Heart left ventricle (tissue), 16 donors: ENCODE measurements at regions of chr2 and their contacts with region 1.

Region 1: DNA sequence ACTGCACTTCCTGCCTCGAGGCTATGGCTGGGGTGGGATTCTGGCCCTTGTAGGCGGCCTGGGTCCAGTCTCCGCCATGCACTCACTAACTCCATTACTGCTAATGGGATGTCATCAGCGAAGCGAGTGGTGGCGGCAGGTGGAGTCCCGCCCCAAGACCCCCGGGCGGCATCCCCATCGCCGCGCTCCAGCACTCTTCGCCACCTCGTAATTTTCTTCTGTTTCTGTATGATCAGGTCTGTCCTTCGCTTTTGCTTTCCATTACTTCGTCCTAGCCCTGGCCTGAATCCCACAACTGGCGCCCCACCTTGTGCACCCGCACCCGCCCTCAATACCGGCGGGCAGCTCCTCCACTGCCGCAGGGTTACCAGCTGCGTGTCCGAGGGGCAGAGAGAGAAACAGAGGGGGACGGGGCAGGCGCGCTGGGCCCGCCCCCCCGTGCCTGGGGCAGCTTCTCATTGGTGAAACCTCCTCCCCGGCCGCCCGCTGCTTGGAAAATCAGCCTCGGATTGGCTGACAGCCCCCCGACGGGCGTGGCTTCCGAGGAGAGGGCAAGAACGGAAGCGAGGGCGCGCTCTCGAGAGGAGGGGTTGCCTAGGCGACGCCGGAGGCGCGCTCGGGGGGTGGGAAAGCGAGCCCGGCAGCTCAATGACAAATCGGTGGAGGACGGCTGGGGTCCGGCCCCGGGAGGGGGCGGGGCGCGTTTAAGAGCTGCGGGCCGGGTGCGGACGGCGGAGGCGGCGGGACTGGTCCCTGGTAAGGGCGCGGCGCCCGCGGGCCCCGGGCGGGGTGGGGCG is at the start of gene RALB:
- DNase-seq: peak; percentile 100
- ATAC-seq: peak; percentile 96 to 97 (median 96)
- H3K4me3 ChIP-seq: peak within 1 kb of the TSS; percentile 57 to 97 (median 87)
- H3K27ac ChIP-seq: peak within 1 kb of the TSS; percentile 89 to 99 (median 94)
- H3K4me1 ChIP-seq: peaks cover 2 to 53% (median 43%) of the 10 kb centered on the region in 12 donors
- H3K27me3 ChIP-seq: no peaks in the 10 kb centered on the region
- CTCF ChIP-seq: no peak
- POLR2A ChIP-seq: peak in 1 of 2 donors; percentile 76
- total RNA-seq, gene RALB: 35.7 to 59.9 (median 45.1) TPM

Region 2: DNA sequence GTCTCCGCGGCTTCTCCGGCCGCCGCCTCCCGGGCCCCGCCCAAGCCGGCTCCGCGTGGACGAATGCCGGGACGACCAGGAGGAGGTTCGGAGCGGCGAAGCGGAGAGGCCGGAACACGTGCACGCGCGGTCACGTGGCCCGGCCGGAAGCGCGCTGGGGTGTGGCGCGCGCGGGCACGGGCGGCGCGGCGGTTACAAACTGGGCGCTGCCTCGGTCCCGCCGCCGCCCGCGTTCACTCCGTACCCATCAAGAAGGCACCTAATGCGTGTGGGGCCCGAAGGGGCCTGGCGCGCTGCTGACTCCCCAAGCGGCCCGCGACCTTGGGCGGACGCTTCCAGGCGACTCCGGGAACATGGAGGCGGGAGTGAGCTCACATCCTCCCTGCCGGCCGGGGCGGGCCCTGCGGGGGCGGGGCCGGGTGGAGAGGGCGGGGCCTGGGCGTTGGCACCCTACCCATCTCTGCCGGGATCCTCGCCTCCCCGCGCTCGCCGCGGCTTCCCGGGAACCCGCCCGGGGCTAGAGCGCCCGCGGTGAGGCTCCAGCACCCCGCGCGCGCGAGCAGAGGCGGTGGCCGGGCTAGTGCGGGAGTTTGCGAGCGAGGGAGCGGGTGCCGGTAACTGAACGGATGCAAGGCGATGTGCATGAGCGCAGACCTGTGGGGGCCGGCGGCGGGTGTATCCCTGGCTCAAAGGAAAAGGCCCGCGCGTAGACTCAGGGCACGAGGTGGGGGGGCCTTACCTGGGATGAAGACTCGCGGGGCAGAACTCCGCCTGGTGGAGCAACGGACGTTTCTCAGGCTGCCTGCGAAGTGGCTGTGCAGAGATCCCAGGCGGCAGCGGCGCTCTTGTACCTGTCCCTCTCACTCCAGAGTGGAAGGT is 29.1 kb before region 1 on chr2 and contains the start of gene TMEM185B:
- intact Hi-C with region 1: loop called in 4 of 10 experiments (anchors 1 to 5 kb)
- DNase-seq: peak; percentile 90 to 96 (median 92)
- ATAC-seq: peak; percentile 87 to 98 (median 97)
- H3K4me3 ChIP-seq: peak within 1 kb of the TSS; percentile 38 to 89 (median 70)
- H3K27ac ChIP-seq: peak within 1 kb of the TSS; percentile 83 to 98 (median 90)
- H3K4me1 ChIP-seq: peaks cover 0 to 41% (median 25%) of the 10 kb centered on the region in 12 donors
- H3K27me3 ChIP-seq: no peaks in the 10 kb centered on the region
- CTCF ChIP-seq: peak in 7 of 12 donors; percentile 4 to 44 (median 26)
- POLR2A ChIP-seq: peak in 1 of 2 donors; percentile 74
- total RNA-seq, gene TMEM185B: 16.1 to 29.8 (median 26.8) TPM

Region 3: DNA sequence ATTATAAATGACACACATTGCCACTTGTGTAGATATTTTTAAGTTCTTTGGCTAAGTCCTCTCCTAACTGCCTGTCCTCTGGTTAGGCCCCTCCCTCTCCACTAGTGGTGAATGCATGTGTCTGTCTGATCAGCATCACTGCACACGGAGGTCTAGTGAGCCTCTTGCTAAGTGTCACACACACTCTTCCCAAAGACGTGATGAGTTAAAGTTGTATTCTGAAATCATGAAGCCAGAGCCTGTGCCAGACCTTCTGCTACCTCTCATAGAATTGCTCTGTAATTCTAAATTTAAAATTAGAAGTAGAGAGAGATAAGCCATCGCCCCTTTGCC is 41.6 kb after region 1 on chr2:
- intact Hi-C with region 1: loop called in 2 of 10 experiments (anchors 2 to 5 kb)
- DNase-seq: peak in 2 of 5 donors; percentile 41 to 47
- ATAC-seq: peak in 3 of 4 donors; percentile 66 to 94 (median 72)
- H3K4me3 ChIP-seq: no peak overlapping the region
- H3K27ac ChIP-seq: peak overlapping the region in 2 of 12 donors; percentile 23 to 32
- H3K4me1 ChIP-seq: peaks cover 0 to 41% (median 28%) of the 10 kb centered on the region in 12 donors
- H3K27me3 ChIP-seq: no peaks in the 10 kb centered on the region
- CTCF ChIP-seq: no peak
- POLR2A ChIP-seq: no peak

Region 4: DNA sequence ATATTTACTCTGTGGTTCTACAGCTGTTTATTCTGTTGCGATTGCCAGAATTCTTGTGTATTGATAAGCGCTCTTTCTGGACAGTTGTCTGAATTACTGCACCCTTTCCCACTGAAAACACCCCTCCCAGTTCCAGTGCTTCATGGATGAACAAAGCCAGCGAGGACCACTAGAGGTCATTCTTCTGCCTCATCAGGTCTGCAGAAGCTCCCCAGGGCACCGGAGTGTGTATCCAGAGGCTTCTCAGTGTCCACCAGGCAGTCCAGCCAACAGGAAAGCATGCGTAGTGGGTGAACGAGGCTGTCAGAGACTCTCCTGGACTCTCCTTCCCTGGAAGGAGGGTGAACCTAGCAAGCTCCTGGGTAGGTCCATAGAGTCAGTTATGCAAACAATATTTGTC is 52.9 kb after region 1 on chr2:
- intact Hi-C with region 1: loop called in 8 of 10 experiments (anchors 5 to 10 kb)
- DNase-seq: no peak
- ATAC-seq: peak in 2 of 4 donors; percentile 36 to 37
- H3K4me3 ChIP-seq: no peak overlapping the region
- H3K27ac ChIP-seq: no peak overlapping the region
- H3K4me1 ChIP-seq: no peaks in the 10 kb centered on the region
- H3K27me3 ChIP-seq: no peaks in the 10 kb centered on the region
- CTCF ChIP-seq: peak in 9 of 12 donors; percentile 20 to 42 (median 29)
- POLR2A ChIP-seq: no peak

Region 5: GRCh38 chr2:121155502-121156056 is 903.2 kb after region 1 on chr2:
- intact Hi-C with region 1: no loop called
- DNase-seq: no peak
- ATAC-seq: peak in 1 of 4 donors; percentile 38
- H3K4me3 ChIP-seq: no peak overlapping the region
- H3K27ac ChIP-seq: no peak overlapping the region
- H3K4me1 ChIP-seq: no peaks in the 10 kb centered on the region
- H3K27me3 ChIP-seq: no peaks in the 10 kb centered on the region
- CTCF ChIP-seq: no peak
- POLR2A ChIP-seq: no peak